Activated CD4-positive, alpha-beta T cell treated with anti-CD3 and anti-CD28 coated beads, Interleukin-2, amount 10 ng/mL, durations not matched to agents 24 days and 14 days (primary cell): ENCODE measurements at regions of chr15 and their contacts with region 1.

Region 1: DNA sequence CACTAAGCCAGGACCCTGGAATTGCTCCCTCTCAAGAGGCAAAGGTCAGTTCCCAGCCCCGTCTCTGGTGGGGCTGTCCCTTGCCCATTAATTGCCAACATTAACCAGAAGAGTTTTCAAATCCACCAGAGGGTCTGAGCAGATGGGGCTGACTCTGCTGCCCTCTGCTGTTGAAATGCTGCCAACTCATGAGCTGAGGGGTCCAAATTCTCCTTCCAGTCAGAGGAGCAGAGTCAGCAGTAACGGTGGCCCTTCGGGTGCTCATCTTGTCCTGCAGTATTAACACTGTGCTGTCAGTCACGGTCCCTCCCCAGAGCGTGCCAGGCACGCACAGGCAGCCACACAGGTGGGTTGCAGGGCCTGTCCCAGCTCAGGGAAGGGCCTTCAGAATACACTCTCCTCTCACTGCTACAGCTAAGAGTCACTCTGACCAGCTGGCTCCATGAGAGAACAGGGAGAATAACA is 10.7 kb upstream of the SPTBN5 start:
- DNase-seq: peak; percentile 91
- H3K4me3 Mint-ChIP-seq: no peak overlapping the region
- H3K27ac Mint-ChIP-seq: peak overlapping the region; percentile 53
- H3K4me1 Mint-ChIP-seq: peaks cover 10% of the 10 kb centered on the region
- H3K27me3 Mint-ChIP-seq: no peaks in the 10 kb centered on the region

Region 2: GRCh38 chr15:41774062-41774881 is 130.3 kb before region 1 on chr15 and contains the start of gene MAPKBP1:
- intact Hi-C with region 1: loop called (anchors 1 kb)
- DNase-seq: peak; percentile 100
- H3K4me3 Mint-ChIP-seq: peak within 1 kb of the TSS; percentile 95
- H3K27ac Mint-ChIP-seq: peak within 1 kb of the TSS; percentile 94
- H3K4me1 Mint-ChIP-seq: peaks cover 49% of the 10 kb centered on the region
- H3K27me3 Mint-ChIP-seq: no peaks in the 10 kb centered on the region
- total RNA-seq, gene MAPKBP1: 24.8 and 27.1 TPM in 2 replicates

Region 3: DNA sequence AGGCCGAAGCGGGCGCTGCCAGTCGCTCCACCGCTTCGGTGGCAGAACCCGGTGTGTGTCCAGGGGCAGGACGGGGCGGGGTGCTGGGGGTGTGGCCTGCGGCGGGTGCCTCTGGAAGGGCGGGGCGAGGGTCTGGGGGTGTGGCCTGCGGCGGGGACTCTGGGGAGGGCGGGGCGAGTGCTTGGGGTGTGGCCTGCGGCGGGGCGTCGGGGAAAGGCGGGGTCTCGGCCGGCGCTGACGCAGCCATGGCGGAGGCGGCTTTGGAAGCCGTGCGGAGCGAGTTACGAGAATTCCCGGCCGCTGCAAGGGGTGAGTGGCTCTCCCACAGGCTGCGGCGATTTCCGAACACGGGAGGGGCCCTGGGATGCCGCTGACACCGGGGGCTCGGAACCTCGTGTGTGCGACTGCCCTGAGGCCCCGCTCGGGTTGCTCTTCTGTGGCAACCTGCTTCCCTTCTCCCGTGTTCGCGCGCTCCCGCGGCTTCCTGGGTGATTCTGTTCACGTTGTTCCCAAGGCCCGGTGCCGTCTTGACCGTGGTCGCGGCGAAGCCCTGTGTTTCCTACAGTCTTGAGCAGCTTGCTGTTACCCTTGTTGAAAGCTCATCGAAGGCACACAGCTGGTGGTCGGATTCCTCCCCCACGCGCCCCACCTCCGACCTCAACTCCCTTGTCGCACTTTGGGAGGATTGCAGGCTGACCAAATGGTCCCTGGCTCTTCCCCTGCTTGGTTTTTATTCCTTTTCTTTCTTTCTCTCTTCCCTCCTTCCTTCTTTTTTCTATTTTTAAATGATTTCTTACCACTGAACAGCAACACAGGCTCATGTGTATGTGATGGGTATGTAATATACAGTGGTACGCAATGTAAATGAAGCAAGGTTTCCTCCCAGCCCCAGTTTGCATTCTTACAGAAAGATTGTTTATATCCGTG is 76.4 kb before region 1 on chr15 and contains the start of gene JMJD7:
- intact Hi-C with region 1: loop called (anchors 2 kb)
- DNase-seq: peak; percentile 98
- H3K4me3 Mint-ChIP-seq: peak within 1 kb of the TSS; percentile 86
- H3K27ac Mint-ChIP-seq: peak within 1 kb of the TSS; percentile 87
- H3K4me1 Mint-ChIP-seq: peaks cover 38% of the 10 kb centered on the region
- H3K27me3 Mint-ChIP-seq: peaks cover 2% of the 10 kb centered on the region
- total RNA-seq, gene JMJD7: 18.3 and 20.1 TPM in 2 replicates